HCT116 (cell line): ENCODE measurements at regions of chr6 and their contacts with region 1.

Region 1: DNA sequence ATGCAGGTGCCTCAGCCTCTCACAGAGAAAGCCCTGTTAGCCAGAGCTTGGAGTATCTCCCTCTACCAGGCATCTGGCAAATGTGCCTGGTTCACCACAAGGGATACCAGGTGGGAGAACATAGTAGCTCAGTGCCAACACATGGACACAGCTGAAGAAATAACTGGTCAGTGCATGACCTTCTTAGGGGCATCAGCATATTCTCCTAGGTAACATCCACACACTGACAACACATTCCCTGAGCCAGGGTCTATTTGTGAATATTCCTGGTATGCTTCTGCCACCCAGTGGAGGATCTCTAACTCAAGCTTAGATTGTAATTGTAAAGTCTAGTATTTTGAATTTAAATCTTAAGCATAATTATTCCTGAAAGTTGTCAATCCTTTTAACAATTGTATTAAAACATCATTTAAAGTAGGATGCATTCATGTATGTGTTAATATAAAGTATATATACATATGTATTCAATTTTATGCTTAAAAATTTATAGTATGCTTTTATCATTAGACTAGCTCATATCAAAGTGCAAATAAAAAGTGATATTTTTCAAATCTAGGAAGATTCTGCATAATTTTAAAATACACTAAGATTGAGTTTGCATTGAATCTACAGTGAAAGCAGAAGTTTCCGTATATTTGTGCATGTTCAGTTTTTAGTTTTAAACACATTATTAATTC is 45.3 kb upstream of the COL21A1 start:
- DNase-seq: peak; percentile 53
- ATAC-seq: peak; percentile 86
- H3K4me3 ChIP-seq: no peak overlapping the region
- H3K27ac ChIP-seq: no peak overlapping the region
- H3K4me1 ChIP-seq: peaks cover 0 to 5% of the 10 kb centered on the region in 2 experiments; a peak in 2 of 4 replicates
- H3K27me3 ChIP-seq: no peaks in the 10 kb centered on the region
- CTCF ChIP-seq: peak; percentile 50 to 80 (median 74); a peak in 5 of 6 replicates
- POLR2A ChIP-seq: no peak
- RAD21 ChIP-seq: peak; percentile 91

Region 2: GRCh38 chr6:55963301-55963700 is 329.3 kb before region 1 on chr6:
- CTCF ChIA-PET with region 1: interaction called, 13 read pairs
- POLR2A ChIA-PET with region 1: interaction called, 6 read pairs
- RAD21 ChIA-PET with region 1: no interaction called
- intact Hi-C with region 1: no loop called
- DNase-seq: peak; percentile 18
- ATAC-seq: peak; percentile 57; the same call in 1 of the 2 replicates
- H3K4me3 ChIP-seq: no peak overlapping the region
- H3K27ac ChIP-seq: no peak overlapping the region
- H3K4me1 ChIP-seq: no peaks in the 10 kb centered on the region
- H3K27me3 ChIP-seq: no peaks in the 10 kb centered on the region
- CTCF ChIP-seq: peak in 2 of 3 experiments; percentile 63 to 70; a peak in 4 of 6 replicates
- POLR2A ChIP-seq: no peak
- RAD21 ChIP-seq: no peak; the same call in 1 of the 2 replicates

Region 3: DNA sequence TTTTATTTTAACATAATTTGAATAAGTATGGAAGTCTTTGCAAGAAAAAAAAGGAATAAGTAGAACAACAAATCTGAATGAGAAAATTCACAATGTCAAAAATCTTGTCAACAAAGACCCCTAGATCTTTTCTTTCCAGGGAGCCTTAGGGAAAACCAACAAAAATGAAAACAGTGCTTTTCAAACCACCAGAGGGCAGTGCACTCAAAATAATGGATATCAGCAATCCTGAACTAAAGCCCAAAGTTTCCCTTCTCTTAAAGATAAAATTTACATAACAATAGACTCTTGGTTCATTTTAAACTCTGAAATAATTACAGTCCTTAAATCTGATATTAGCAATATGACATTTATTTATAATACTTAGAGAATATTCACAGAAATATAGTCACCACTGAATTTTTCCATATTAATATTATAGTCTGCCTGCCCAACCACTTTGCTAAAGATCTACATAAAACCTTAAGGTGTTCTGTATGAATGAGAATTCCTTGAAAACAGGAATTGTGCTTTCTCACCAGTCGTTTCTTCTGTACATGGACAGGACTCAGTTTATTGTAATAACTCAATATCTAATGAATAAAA is 311.9 kb before region 1 on chr6:
- CTCF ChIA-PET with region 1: interaction called, 30 read pairs
- POLR2A ChIA-PET with region 1: no interaction called
- RAD21 ChIA-PET with region 1: interaction called in 1 of 2 experiments, 6 read pairs
- intact Hi-C with region 1: loop called (anchors 1 kb)
- DNase-seq: peak; percentile 18
- ATAC-seq: no peak
- H3K4me3 ChIP-seq: no peak overlapping the region
- H3K27ac ChIP-seq: no peak overlapping the region
- H3K4me1 ChIP-seq: no peaks in the 10 kb centered on the region
- H3K27me3 ChIP-seq: no peaks in the 10 kb centered on the region
- CTCF ChIP-seq: peak; percentile 47 to 83 (median 71)
- POLR2A ChIP-seq: no peak
- RAD21 ChIP-seq: peak; percentile 84